OCI-LY7 (cell line): ENCODE measurements at regions of chr14 and their contacts with region 1.

Region 1: DNA sequence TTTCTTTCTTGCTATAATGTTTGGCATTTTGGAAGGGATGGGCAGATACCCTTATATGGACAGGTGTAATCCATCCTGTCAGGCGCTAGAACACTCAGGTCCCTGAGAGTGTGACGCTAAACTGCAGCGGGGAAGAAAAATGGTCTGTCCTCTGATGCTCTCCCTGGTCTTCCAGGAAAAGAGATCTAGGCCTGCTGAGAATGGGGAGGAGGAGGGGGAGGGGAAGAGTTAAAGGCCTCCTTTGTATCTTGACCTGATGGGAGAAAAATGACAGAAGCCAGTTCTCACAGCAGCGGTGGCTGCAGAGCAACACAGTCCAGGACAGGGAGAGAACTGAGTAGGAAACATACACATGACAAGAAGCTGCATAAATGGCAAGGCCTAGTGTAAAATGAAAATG is 61.1 kb downstream of the RPS6KA5 start:
- DNase-seq: no peak
- H3K4me3 ChIP-seq: no peak overlapping the region
- H3K27ac ChIP-seq: no peak overlapping the region
- H3K4me1 ChIP-seq: no peaks in the 10 kb centered on the region
- CTCF ChIP-seq: no peak

Region 2: DNA sequence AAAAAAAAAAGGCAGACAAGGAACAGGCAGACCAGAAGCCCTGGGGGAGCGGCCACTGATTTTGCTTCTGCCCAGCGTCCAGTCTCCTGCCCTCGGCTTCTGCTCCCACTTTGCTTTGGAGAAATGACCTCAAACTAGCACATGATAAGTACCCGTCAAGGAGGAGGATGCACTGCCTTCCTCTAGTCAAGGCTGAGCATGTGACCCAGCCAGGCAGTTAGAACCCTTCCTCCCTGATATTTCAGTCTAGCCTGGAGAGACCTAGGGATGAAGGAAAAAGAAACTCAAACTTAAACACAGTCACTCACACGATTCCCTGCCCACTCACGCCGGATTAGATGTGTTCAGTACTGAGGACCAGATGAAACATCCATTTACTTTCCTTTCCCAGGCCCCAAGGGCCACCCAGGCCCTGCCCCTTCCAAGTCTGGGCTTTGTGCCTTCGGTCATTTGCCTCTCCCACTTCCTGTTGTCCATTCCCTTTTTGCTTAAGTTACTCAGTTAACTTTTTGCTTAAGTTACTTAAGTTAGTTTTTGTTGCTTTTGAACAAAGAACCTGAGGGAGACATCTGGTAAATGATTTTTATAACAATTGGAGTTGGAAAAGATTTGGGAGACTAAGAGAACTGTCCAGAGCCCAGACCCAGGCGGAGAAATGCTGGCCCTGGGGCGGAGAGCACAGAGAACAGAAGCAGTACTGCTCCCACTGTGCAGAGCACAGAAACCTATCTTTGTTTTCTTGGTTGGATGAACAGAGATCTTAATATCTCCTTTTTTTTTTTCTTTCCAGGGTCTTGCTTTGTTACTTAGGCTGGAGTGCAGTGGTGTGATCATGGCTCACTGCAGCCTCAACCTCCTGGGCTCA is 160.0 kb before region 1 on chr14:
- CTCF ChIA-PET with region 1: no interaction called
- POLR2A ChIA-PET with region 1: interaction called, 11 read pairs
- intact Hi-C with region 1: no loop called
- DNase-seq: no peak
- H3K4me3 ChIP-seq: no peak overlapping the region
- H3K27ac ChIP-seq: no peak overlapping the region
- H3K4me1 ChIP-seq: no peaks in the 10 kb centered on the region
- CTCF ChIP-seq: no peak